Mammary epithelial cell (primary cell): ENCODE measurements at regions of chr9 and their contacts with region 1.

Region 1: GRCh38 chr9:96305171-96305570 is 3.2 kb upstream of the HSD17B3 start:
- DNase-seq: no peak
- H3K4me3 ChIP-seq: no peak overlapping the region
- H3K27ac ChIP-seq: no peak overlapping the region
- H3K4me1 ChIP-seq: peaks cover 9% of the 10 kb centered on the region
- H3K27me3 ChIP-seq: peaks cover 24% of the 10 kb centered on the region
- CTCF ChIP-seq: no peak

Region 2: GRCh38 chr9:96256800-96257199 is 48.4 kb before region 1 on chr9:
- CTCF ChIA-PET with region 1: no interaction called
- dilution Hi-C with region 1: loop called (anchors 5 kb)
- in situ Hi-C with region 1: no loop called
- intact Hi-C with region 1: no loop called
- DNase-seq: peak; percentile 55
- H3K4me3 ChIP-seq: no peak overlapping the region
- H3K27ac ChIP-seq: no peak overlapping the region
- H3K4me1 ChIP-seq: no peaks in the 10 kb centered on the region
- H3K27me3 ChIP-seq: peaks cover 22% of the 10 kb centered on the region
- CTCF ChIP-seq: no peak

Region 3: GRCh38 chr9:96383165-96383942 is 78.2 kb after region 1 on chr9 and contains the start of gene SLC35D2:
- CTCF ChIA-PET with region 1: no interaction called
- dilution Hi-C with region 1: no loop called
- in situ Hi-C with region 1: no loop called
- intact Hi-C with region 1: no loop called
- DNase-seq: peak; percentile 56
- H3K4me3 ChIP-seq: peak within 1 kb of the TSS; percentile 66 to 81 (median 72)
- H3K27ac ChIP-seq: peak within 1 kb of the TSS; percentile 25
- H3K4me1 ChIP-seq: peaks cover 4% of the 10 kb centered on the region
- H3K27me3 ChIP-seq: no peaks in the 10 kb centered on the region
- CTCF ChIP-seq: no peak
- total RNA-seq, gene SLC35D2: 16.7 to 20.9 TPM